ENCODE measurements at regions of chr20 and their contacts with region 1.

Region 1: GRCh38 chr20:16801919-16802911 is 54.1 kb downstream of the OTOR start:
- DNase-seq: peak in 7 of 9 donors; percentile 13 to 43 (median 32)
- ATAC-seq: peak; percentile 45
- H3K4me3 ChIP-seq: no peak overlapping the region
- H3K4me3 Mint-ChIP-seq: no peak overlapping the region
- H3K27ac ChIP-seq: no peak overlapping the region
- H3K27ac Mint-ChIP-seq: no peak overlapping the region
- H3K4me1 ChIP-seq: no peaks in the 10 kb centered on the region
- H3K4me1 Mint-ChIP-seq: peaks cover 0 to 5% (median 0%) of the 10 kb centered on the region in 7 donors
- H3K27me3 ChIP-seq: no peaks in the 10 kb centered on the region
- H3K27me3 Mint-ChIP-seq: peaks cover 30 to 71% (median 55%) of the 10 kb centered on the region in 5 donors

Region 2: GRCh38 chr20:16821211-16822089 is 19.2 kb after region 1 on chr20:
- CTCF ChIA-PET with region 1: interaction called, 7 read pairs
- POLR2A ChIA-PET with region 1: no interaction called
- intact Hi-C with region 1: loop called in 1 of 2 experiments (anchors 1 kb)
- DNase-seq: peak in 5 of 9 donors; percentile 8 to 27 (median 17)
- ATAC-seq: peak; percentile 68
- H3K4me3 ChIP-seq: no peak overlapping the region
- H3K4me3 Mint-ChIP-seq: no peak overlapping the region
- H3K27ac ChIP-seq: no peak overlapping the region
- H3K27ac Mint-ChIP-seq: no peak overlapping the region
- H3K4me1 ChIP-seq: no peaks in the 10 kb centered on the region
- H3K4me1 Mint-ChIP-seq: no peaks in the 10 kb centered on the region
- H3K27me3 ChIP-seq: no peaks in the 10 kb centered on the region
- H3K27me3 Mint-ChIP-seq: peaks cover 16 to 48% (median 33%) of the 10 kb centered on the region in 5 donors

Region 3: GRCh38 chr20:16885746-16886145 is 83.5 kb after region 1 on chr20:
- CTCF ChIA-PET with region 1: no interaction called
- POLR2A ChIA-PET with region 1: no interaction called
- intact Hi-C with region 1: no loop called
- DNase-seq: no peak
- ATAC-seq: no peak
- H3K4me3 ChIP-seq: no peak overlapping the region
- H3K4me3 Mint-ChIP-seq: no peak overlapping the region
- H3K27ac ChIP-seq: no peak overlapping the region
- H3K27ac Mint-ChIP-seq: peak overlapping the region in 1 of 9 donors; percentile 3
- H3K4me1 ChIP-seq: no peaks in the 10 kb centered on the region
- H3K4me1 Mint-ChIP-seq: no peaks in the 10 kb centered on the region
- H3K27me3 ChIP-seq: no peaks in the 10 kb centered on the region
- H3K27me3 Mint-ChIP-seq: peaks cover 0 to 24% (median 4%) of the 10 kb centered on the region in 5 donors

Region 4: DNA sequence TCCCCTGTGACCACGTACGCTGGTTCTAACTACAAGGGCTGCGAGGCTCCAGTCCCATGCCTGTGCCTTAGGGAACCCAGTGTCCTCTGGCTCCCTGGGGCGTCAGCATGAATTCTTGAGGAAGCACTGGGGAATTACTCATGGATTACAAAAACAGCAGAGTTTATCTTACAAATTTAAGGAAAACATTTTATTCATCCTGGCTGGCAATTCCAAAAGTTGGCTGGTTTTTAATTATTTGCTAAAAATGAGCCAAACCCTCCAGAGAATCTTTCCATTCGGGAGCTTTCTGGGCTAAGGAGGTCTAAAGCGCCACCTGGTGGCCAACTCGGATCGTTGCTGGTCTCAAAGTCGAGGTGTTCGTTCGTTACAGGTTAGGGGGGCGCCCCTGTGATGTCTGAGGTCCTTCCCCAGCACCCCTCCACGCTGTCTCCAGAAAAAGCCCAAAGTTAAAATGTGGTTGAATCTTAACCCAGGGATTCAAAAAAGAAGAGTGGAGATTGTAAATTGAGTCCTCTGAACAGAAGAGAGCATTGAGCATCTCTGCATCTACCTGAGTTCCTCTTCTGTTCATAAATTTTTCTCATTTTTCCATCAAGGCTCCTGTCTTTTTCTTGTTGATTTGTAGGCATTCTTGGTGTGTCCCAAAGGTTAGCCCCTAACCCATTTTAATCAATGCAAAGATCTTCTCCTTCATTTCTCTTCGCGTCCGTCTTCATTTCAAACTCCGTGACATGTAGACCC is 629.6 kb after region 1 on chr20:
- CTCF ChIA-PET with region 1: interaction called, 3 read pairs
- POLR2A ChIA-PET with region 1: no interaction called
- intact Hi-C with region 1: loop called in 1 of 2 experiments (anchors 2 kb)
- DNase-seq: peak in 8 of 9 donors; percentile 16 to 47 (median 26)
- ATAC-seq: no peak
- H3K4me3 ChIP-seq: no peak overlapping the region
- H3K4me3 Mint-ChIP-seq: no peak overlapping the region
- H3K27ac ChIP-seq: no peak overlapping the region
- H3K27ac Mint-ChIP-seq: no peak overlapping the region
- H3K4me1 ChIP-seq: no peaks in the 10 kb centered on the region
- H3K4me1 Mint-ChIP-seq: peaks cover 0 to 5% (median 0%) of the 10 kb centered on the region in 7 donors
- H3K27me3 ChIP-seq: no peaks in the 10 kb centered on the region
- H3K27me3 Mint-ChIP-seq: peaks cover 15 to 29% (median 21%) of the 10 kb centered on the region in 5 donors

Region 5: DNA sequence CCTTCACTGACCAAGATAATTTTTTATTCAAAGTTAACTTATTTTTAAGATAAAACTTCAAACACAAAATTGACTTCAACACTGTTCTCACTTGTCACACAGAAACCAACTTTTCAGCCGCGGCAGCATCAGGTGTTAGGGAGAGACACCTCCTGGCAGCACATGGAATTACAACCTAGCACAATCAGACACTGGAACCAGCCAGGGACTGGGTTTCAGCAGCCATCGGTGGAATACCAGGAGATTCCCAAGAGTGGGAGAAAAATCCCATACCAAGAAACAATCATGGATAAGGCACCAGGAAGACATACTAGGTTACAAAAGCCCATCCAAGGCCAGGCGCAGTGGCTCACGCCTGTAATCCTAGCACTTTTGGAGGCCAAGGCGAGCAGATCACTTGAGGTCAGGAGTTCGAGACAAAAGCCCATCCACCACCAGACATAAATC is 1096.4 kb after region 1 on chr20:
- CTCF ChIA-PET with region 1: no interaction called
- POLR2A ChIA-PET with region 1: no interaction called
- intact Hi-C with region 1: loop called in 1 of 2 experiments (anchors 2 kb)
- DNase-seq: peak; percentile 23 to 64 (median 54)
- ATAC-seq: peak; percentile 81
- H3K4me3 ChIP-seq: no peak overlapping the region
- H3K4me3 Mint-ChIP-seq: no peak overlapping the region
- H3K27ac ChIP-seq: no peak overlapping the region
- H3K27ac Mint-ChIP-seq: no peak overlapping the region
- H3K4me1 ChIP-seq: no peaks in the 10 kb centered on the region
- H3K4me1 Mint-ChIP-seq: peaks cover 0 to 21% (median 11%) of the 10 kb centered on the region in 7 donors
- H3K27me3 ChIP-seq: no peaks in the 10 kb centered on the region
- H3K27me3 Mint-ChIP-seq: peaks cover 22 to 41% (median 34%) of the 10 kb centered on the region in 5 donors

Region 6: DNA sequence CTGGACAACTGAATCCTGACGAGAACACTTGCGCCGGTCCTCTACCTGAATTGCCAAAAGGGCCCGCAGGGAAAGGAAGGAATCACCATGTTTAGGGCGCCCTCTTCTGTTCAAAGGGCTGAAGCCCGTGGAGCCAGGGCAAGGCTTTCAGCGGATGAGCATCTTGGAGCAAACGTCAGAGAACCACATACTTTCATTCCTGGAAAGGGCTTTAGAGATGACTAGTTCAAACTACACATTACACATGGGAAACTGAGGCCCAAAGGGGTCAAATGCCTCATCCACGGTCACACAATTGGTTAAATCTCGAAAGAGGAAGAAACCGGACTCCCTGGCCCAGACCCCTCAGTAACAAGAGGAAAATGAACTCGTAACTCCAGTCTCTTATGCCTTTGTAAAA is 1474.6 kb after region 1 on chr20:
- CTCF ChIA-PET with region 1: no interaction called
- POLR2A ChIA-PET with region 1: no interaction called
- intact Hi-C with region 1: loop called (anchors 5 to 10 kb)
- DNase-seq: peak in 8 of 9 donors; percentile 12 to 62 (median 36)
- ATAC-seq: peak; percentile 74
- H3K4me3 ChIP-seq: no peak overlapping the region
- H3K4me3 Mint-ChIP-seq: no peak overlapping the region
- H3K27ac ChIP-seq: no peak overlapping the region
- H3K27ac Mint-ChIP-seq: no peak overlapping the region
- H3K4me1 ChIP-seq: no peaks in the 10 kb centered on the region
- H3K4me1 Mint-ChIP-seq: peaks cover 0 to 6% (median 0%) of the 10 kb centered on the region in 7 donors
- H3K27me3 ChIP-seq: peaks cover 2 to 4% of the 10 kb centered on the region in 2 donors
- H3K27me3 Mint-ChIP-seq: peaks cover 43 to 67% (median 50%) of the 10 kb centered on the region in 5 donors

Measured in naive thymus-derived CD4-positive, alpha-beta T cell (primary cell).